MCF 10A (cell line): ENCODE measurements at regions of chr6 and their contacts with region 1.

Region 1: DNA sequence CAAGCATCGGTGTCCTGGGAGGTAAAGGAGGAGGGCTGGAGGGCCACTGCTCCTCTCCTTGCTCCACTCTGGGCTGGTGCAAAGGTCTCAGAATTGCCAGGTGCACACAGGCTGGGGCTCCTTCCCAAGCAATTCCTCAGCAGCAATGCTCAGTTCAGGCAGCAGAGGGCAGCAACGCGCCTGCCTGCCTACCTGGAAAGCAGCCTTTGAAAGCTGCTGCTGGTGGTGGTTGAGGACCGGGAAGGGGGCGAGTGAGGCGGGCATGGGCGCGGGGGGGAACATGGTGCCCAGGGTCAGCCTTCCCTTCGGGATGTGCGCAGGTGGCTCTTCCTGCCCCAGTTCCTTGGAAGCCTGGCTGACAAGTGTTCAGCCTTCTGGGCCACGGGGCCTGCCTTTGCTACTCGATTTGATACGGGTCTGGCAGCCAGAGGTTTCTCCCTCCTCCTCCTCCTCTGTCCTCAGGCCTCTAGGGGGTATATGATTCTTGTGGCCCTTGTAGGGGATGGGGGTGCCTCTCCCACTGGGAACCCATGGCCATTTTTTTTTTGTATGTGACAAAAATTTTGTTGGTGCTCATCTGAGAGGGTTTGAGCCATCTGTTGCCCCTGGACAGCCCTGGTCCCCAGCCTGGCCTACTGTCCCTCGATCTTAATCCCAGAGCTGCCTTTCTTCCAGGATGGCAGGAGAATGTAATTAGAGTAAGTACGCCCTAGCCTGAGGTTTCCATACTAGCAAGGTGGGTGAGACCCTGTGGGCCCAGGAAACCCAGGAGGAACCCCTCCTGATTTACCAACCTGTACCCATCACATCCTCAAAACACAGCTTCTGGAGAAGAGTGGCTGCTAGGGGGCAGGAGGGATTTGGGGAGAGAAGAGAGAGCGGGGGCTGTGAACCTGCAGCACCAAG is 20.1 kb downstream of the MRPS18A start:
- DNase-seq: peak; percentile 81
- H3K4me3 Mint-ChIP-seq: peak overlapping the region; percentile 3
- H3K27ac Mint-ChIP-seq: peak overlapping the region; percentile 71
- H3K4me1 Mint-ChIP-seq: peaks cover 30% of the 10 kb centered on the region
- H3K27me3 Mint-ChIP-seq: no peaks in the 10 kb centered on the region
- CTCF ChIP-seq: peak; percentile 87

Region 2: GRCh38 chr6:43402820-43403219 is 264.7 kb before region 1 on chr6:
- CTCF ChIA-PET with region 1: no interaction called
- POLR2A ChIA-PET with region 1: no interaction called
- intact Hi-C with region 1: no loop called
- DNase-seq: peak; percentile 18
- H3K4me3 Mint-ChIP-seq: no peak overlapping the region
- H3K27ac Mint-ChIP-seq: no peak overlapping the region
- H3K4me1 Mint-ChIP-seq: peaks cover 7% of the 10 kb centered on the region
- H3K27me3 Mint-ChIP-seq: no peaks in the 10 kb centered on the region
- CTCF ChIP-seq: no peak

Region 3: DNA sequence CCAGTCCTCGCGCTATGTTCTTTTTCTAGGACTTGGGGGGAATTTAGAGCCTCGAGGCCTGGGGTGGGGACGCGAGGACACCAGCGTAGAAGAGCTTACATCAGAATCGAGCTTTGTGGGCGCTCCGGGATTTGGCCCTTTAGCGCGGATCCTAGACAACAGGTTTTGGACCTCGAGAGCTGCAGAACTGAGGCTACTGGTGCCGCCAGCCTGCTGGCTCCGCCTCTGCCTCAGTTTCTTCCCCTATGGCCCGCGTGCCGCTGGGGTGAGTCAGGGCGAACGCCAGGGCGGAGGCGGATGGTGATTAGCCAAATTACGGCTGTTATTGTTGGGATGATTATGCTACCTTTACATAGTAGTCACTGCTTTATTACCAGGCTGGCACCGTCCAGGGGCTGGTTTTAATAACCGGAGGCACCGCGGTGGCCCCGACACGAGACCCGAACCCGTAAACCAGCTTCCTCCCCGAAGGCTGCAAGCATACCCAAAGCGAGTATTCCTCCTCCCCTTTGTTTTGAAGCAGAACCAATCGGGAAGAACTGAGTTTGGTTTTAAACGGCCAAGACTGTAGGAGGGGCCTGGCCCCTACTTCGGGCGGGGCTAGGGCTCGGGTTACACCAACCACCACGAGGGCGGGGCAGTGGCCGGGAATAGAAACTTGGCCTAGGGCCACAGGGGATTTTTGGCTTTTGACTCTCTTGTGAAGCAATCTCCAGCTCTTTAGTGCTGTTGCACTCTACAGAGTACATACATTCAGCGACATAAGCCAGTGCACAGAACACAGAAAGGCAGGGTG is 37.8 kb before region 1 on chr6:
- CTCF ChIA-PET with region 1: interaction called, 3 read pairs
- POLR2A ChIA-PET with region 1: interaction called, 17 read pairs
- intact Hi-C with region 1: loop called (anchors 5 kb)
- DNase-seq: peak; percentile 99
- H3K4me3 Mint-ChIP-seq: peak overlapping the region; percentile 99
- H3K27ac Mint-ChIP-seq: peak overlapping the region; percentile 97
- H3K4me1 Mint-ChIP-seq: peaks cover 34% of the 10 kb centered on the region
- H3K27me3 Mint-ChIP-seq: no peaks in the 10 kb centered on the region
- CTCF ChIP-seq: no peak

Region 4: GRCh38 chr6:43687437-43688347 is 20.2 kb after region 1 on chr6 and contains the start of gene MRPS18A:
- CTCF ChIA-PET with region 1: interaction called, 10 read pairs
- POLR2A ChIA-PET with region 1: interaction called, 80 read pairs
- intact Hi-C with region 1: no loop called
- DNase-seq: peak; percentile 83
- H3K4me3 Mint-ChIP-seq: peak within 1 kb of the TSS; percentile 90
- H3K27ac Mint-ChIP-seq: peak within 1 kb of the TSS; percentile 92
- H3K4me1 Mint-ChIP-seq: peaks cover 33% of the 10 kb centered on the region
- H3K27me3 Mint-ChIP-seq: no peaks in the 10 kb centered on the region
- CTCF ChIP-seq: no peak
- total RNA-seq, gene MRPS18A: 69.1 and 79.5 TPM in 2 replicates

Region 5: DNA sequence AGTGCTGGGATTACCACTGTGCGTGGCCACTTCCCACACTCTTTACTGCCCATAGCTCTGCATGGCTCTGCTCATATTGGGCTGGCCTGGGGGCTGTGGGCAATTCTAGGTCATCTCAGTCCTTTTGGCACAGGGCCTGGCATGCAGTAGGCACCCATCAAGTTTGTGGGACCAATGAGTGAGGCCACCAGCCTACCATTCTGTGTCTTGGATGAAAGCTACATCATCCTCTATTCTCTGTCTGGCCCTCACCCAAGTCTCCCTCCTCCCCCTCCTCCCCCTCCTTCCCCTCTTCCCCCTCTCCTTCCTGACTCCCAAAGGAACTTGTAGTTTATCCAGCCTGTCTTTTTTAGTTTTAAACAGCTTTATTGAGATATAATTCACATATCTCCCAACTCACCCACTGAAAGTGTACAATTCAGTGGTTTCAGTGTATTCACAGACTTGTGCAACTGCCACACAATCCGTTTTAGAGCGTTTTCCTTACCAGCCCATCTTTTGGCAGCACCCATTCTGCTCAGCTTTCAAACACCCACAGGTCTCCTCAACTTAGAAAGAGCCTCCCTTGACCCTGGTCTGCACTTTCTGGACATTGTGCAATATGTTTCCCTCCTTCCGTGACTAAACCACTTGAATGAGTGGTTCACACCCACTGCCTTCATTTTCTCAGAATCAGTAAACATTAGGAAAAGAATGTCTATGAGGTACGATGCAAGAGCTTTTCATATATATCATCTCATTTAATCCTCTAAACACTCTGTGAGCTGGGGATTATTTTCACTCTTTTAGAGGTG is 41.6 kb after region 1 on chr6:
- CTCF ChIA-PET with region 1: interaction called, 9 read pairs
- POLR2A ChIA-PET with region 1: interaction called, 16 read pairs
- intact Hi-C with region 1: loop called (anchors 5 kb)
- DNase-seq: peak; percentile 88
- H3K4me3 Mint-ChIP-seq: peak overlapping the region; percentile 16
- H3K27ac Mint-ChIP-seq: peak overlapping the region; percentile 82
- H3K4me1 Mint-ChIP-seq: peaks cover 13% of the 10 kb centered on the region
- H3K27me3 Mint-ChIP-seq: peaks cover 20% of the 10 kb centered on the region
- CTCF ChIP-seq: no peak

Region 6: DNA sequence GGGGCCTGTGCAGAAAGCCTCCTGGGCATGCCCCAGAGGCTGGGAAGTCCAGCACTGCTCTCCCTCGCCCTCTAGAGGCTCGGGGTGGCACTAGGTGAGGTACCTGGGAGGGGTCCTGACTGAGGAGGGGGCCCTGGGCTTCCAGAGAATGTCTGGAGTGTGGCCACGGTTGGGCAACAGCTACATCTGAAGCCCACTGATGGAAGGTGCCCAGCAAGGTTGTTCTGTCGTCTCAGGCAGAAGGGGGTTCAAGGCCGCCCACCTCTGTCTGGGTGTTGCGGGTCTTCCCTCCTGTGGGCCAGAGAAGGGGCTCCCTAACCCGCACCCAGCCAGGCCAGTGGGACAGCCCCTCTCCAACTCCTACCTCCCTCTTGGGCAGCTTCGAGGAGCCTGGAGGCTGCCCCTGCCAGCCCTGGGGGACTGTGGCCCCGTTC is 91.1 kb after region 1 on chr6:
- CTCF ChIA-PET with region 1: interaction called, 5 read pairs
- POLR2A ChIA-PET with region 1: no interaction called
- intact Hi-C with region 1: loop called (anchors 1 kb)
- DNase-seq: no peak
- H3K4me3 Mint-ChIP-seq: no peak overlapping the region
- H3K27ac Mint-ChIP-seq: peak overlapping the region; percentile 17
- H3K4me1 Mint-ChIP-seq: peaks cover 11% of the 10 kb centered on the region
- H3K27me3 Mint-ChIP-seq: peaks cover 14% of the 10 kb centered on the region
- CTCF ChIP-seq: peak; percentile 57

Region 7: GRCh38 chr6:43838276-43839036 is 171.0 kb after region 1 on chr6:
- CTCF ChIA-PET with region 1: no interaction called
- POLR2A ChIA-PET with region 1: no interaction called
- intact Hi-C with region 1: no loop called
- DNase-seq: peak; percentile 34
- H3K4me3 Mint-ChIP-seq: no peak overlapping the region
- H3K27ac Mint-ChIP-seq: no peak overlapping the region
- H3K4me1 Mint-ChIP-seq: no peaks in the 10 kb centered on the region
- H3K27me3 Mint-ChIP-seq: no peaks in the 10 kb centered on the region
- CTCF ChIP-seq: peak; percentile 39

Region 8: DNA sequence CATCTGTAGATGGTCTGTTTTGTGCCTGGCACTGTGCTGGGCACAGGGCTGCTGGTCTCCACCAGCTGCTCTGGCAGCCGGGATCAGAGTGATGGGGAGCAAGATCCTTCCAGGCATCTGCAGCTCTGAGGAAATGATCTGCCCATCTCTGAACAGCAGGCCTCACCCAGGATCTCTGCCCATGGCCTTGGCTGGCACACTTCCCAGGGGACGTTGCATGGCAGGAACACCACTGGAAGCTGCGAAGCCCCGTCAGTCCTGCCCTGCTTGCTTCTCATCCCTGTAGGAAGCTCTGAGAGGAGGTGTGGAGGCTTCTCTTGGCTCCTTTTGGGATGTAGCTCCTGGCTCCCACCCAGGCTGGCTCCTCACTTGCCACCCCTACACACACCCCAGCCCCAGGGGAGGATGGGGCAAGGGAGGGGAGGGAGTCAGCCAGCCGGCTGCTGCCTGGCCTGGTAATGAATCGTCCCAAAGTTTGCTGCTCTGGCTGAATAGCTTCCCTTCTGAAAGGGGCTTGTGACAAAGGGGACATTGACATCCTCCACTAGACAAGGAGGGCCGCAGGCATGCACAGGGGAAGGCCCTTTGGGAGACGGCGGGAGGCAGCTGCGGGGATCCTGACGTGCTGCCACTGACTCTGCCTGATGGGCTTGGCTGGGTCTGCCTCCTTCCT is 211.5 kb after region 1 on chr6:
- CTCF ChIA-PET with region 1: no interaction called
- POLR2A ChIA-PET with region 1: no interaction called
- intact Hi-C with region 1: no loop called
- DNase-seq: peak; percentile 18
- H3K4me3 Mint-ChIP-seq: no peak overlapping the region
- H3K27ac Mint-ChIP-seq: no peak overlapping the region
- H3K4me1 Mint-ChIP-seq: no peaks in the 10 kb centered on the region
- H3K27me3 Mint-ChIP-seq: no peaks in the 10 kb centered on the region
- CTCF ChIP-seq: no peak